Dorsolateral prefrontal cortex (tissue), 120 donors: ENCODE measurements at regions of chr18 and their contacts with region 1.

Region 1: DNA sequence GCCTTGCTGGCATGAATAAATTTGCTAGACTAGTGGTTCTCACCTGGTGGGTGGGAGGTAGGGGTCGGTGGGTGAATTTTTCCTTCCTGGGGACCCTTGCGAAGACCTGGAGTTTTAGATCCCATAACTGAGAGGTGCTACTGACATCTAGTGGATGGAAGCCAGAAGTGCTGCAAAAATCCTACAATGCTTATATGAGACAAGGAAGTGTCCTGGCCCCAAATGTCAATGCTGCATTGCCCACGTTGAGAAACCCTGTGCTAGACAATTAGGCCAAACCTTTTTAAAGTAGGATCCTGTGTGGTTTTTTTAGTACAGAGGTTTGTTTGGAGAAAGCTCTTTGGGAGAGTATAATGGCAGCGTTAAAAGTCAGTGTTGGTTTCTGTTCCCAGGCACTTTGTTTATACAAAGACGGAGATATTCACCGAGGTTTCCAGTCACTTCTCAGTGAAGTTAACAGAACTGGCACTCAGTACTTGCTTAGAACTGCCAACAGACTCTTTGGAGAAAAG is 9.6 kb downstream of the SERPINB8 start:
- DNase-seq: peak in 3 of 10 donors; percentile 16 to 51 (median 34)
- H3K4me3 ChIP-seq: peak overlapping the region in 54 of 59 donors; percentile 1 to 58 (median 28)
- H3K27ac ChIP-seq: peak overlapping the region in 6 of 59 donors; percentile 5 to 46 (median 26)
- H3K27me3 ChIP-seq: no peaks in the 10 kb centered on the region
- CTCF ChIP-seq: peak; percentile 51 to 92 (median 82)

Region 2: GRCh38 chr18:63518178-63519012 is 461.1 kb before region 1 on chr18:
- intact Hi-C with region 1: loop called (anchors 10 kb)
- DNase-seq: peak in 7 of 10 donors; percentile 32 to 70 (median 46)
- H3K4me3 ChIP-seq: no peak overlapping the region
- H3K27ac ChIP-seq: no peak overlapping the region
- H3K27me3 ChIP-seq: peaks cover 0 to 13% (median 0%) of the 10 kb centered on the region in 45 donors
- CTCF ChIP-seq: peak; percentile 74 to 96 (median 86)

Region 3: GRCh38 chr18:63936156-63936931 is 43.1 kb before region 1 on chr18:
- intact Hi-C with region 1: loop called in 1 of 2 experiments (anchors 5 kb)
- DNase-seq: peak; percentile 40 to 80 (median 76)
- H3K4me3 ChIP-seq: peak overlapping the region; percentile 29 to 81 (median 65)
- H3K27ac ChIP-seq: peak overlapping the region in 4 of 59 donors; percentile 5 to 70 (median 40)
- H3K27me3 ChIP-seq: peaks cover 0 to 19% (median 0%) of the 10 kb centered on the region in 45 donors
- CTCF ChIP-seq: peak in 55 of 56 donors; percentile 48 to 83 (median 67)